ENCODE measurements at regions of chr7 and their contacts with region 1.

Region 1: GRCh38 chr7:92178927-92179924 is at the start of gene LRRD1:
- DNase-seq: peak; percentile 94
- H3K4me3 Mint-ChIP-seq: peak within 1 kb of the TSS; percentile 67
- H3K27ac Mint-ChIP-seq: no peak within 1 kb of the TSS
- H3K4me1 Mint-ChIP-seq: peaks cover 10% of the 10 kb centered on the region
- H3K27me3 Mint-ChIP-seq: no peaks in the 10 kb centered on the region
- total RNA-seq, gene LRRD1: not detected

Region 2: GRCh38 chr7:92245487-92246362 is 66.5 kb after region 1 on chr7 and contains the starts of genes ANKIB1 and KRIT1:
- CTCF ChIA-PET with region 1: no interaction called
- POLR2A ChIA-PET with region 1: no interaction called
- intact Hi-C with region 1: loop called (anchors 2 kb)
- DNase-seq: peak; percentile 92
- H3K4me3 Mint-ChIP-seq: peak within 1 kb of the TSS; percentile 99
- H3K27ac Mint-ChIP-seq: peak within 1 kb of the TSS; percentile 100
- H3K4me1 Mint-ChIP-seq: peaks cover 29% of the 10 kb centered on the region
- H3K27me3 Mint-ChIP-seq: no peaks in the 10 kb centered on the region
- total RNA-seq, gene ANKIB1: 34.8 to 39.9 TPM
- total RNA-seq, gene KRIT1: 29.2 to 29.3 TPM

Region 3: DNA sequence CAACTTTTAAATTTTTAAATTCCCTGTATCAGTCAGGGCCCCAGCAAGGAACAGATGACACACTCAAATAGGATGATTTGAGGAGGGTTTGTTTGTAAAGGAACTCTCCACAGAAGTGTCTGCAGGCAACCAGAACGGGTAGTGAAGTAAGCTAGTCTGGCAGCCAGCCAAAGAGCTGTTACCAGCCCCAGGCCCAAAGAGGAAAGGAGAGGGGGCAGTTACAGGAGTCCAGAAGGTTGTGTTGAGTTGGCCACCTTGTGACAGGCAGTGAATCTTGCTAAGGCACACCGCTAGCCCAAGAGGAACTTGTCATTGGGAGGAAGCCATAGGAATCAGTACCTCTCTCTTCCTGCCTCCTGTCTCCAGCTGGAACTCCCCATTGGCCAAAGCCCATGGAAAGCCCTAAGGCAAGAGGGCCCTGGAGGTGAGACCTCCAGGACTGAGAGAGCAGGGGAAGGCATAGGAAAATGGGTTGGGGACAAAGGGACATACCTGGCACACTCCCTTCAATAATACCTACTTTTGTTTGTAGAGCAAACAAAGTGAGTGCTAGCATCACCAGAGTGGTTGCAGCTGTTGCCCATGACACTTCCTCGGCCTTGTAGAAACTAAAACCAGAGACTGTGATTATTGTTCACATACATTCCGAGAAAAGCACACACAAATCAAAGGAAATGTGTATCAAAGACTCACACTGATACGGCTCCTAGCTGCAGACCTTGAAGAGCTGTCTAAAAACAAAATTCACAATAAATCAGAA is 242.6 kb after region 1 on chr7:
- CTCF ChIA-PET with region 1: no interaction called
- POLR2A ChIA-PET with region 1: no interaction called
- intact Hi-C with region 1: loop called (anchors 1 kb)
- DNase-seq: no peak
- H3K4me3 Mint-ChIP-seq: no peak overlapping the region
- H3K27ac Mint-ChIP-seq: no peak overlapping the region
- H3K4me1 Mint-ChIP-seq: peaks cover 10% of the 10 kb centered on the region
- H3K27me3 Mint-ChIP-seq: peaks cover 13% of the 10 kb centered on the region

Region 4: DNA sequence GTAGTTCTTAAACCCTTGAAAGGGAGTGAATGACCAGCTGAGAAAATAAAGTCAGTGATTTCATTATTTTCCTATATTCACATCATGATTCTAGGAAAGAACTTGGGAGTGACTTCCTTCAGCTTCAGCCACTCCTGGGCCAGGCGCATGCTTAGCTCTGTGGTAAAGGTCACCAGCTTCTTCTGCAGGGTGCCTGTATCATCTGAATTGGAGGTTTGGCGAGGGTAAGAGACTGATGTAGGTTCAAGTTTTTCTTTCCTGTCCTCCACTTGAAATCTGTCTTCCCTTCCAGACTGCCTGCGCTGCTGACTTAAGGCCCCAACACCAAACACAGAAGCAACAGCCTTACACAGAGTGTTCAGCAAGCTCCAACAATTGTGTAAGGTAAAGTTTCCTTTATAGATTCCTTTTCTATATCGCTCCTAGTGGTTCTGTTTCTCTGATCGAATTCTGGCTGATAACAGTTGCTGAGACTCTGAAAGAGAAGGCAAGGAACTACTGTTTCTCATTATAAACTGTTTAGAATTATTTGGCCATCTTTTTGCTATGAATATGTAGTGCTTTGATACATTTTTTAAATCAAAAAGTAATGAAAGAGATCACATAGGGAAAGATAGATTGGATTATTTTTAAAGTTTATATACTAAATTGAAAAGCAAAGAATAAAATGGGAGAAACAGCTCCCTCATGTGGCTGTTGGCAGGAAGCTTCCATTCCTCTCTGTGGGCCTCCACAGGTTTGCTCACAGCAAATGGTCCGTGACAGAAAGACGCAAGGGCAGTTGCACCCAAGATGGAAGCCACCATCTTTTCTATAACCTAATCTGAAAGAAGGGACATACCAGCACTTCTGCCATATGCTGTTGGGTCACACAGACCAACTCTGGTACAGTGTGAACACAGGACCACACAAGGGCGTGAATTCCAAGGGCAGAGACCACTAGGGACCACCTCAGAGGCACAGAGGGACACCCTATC is 282.1 kb after region 1 on chr7:
- CTCF ChIA-PET with region 1: interaction called, 4 read pairs
- POLR2A ChIA-PET with region 1: no interaction called
- intact Hi-C with region 1: loop called (anchors 5 kb)
- DNase-seq: peak; percentile 41
- H3K4me3 Mint-ChIP-seq: no peak overlapping the region
- H3K27ac Mint-ChIP-seq: no peak overlapping the region
- H3K4me1 Mint-ChIP-seq: no peaks in the 10 kb centered on the region
- H3K27me3 Mint-ChIP-seq: no peaks in the 10 kb centered on the region

Region 5: DNA sequence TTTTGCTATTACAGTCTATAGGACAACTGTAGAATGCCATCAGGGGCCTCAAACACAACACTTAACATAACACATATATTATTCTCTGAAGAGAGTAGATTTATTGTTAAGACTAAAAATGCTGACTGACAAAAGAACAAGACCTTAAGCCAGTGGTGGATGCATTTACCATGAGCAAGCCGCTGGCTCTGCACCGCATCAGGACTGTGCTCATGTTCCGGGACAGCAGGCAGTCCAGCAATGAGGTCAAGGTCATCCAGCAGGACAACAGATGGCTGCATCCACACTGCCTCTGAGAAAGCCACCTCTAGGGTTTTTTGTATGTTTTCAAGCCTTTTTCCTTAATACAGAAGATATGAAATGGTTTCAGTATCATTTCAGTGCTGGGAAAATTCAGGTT is 325.3 kb after region 1 on chr7:
- CTCF ChIA-PET with region 1: no interaction called
- POLR2A ChIA-PET with region 1: no interaction called
- intact Hi-C with region 1: no loop called
- DNase-seq: no peak
- H3K4me3 Mint-ChIP-seq: no peak overlapping the region
- H3K27ac Mint-ChIP-seq: no peak overlapping the region
- H3K4me1 Mint-ChIP-seq: no peaks in the 10 kb centered on the region
- H3K27me3 Mint-ChIP-seq: no peaks in the 10 kb centered on the region